CD4-positive, alpha-beta T cell (primary cell): ENCODE measurements at regions of chr20 and their contacts with region 1.

Region 1: DNA sequence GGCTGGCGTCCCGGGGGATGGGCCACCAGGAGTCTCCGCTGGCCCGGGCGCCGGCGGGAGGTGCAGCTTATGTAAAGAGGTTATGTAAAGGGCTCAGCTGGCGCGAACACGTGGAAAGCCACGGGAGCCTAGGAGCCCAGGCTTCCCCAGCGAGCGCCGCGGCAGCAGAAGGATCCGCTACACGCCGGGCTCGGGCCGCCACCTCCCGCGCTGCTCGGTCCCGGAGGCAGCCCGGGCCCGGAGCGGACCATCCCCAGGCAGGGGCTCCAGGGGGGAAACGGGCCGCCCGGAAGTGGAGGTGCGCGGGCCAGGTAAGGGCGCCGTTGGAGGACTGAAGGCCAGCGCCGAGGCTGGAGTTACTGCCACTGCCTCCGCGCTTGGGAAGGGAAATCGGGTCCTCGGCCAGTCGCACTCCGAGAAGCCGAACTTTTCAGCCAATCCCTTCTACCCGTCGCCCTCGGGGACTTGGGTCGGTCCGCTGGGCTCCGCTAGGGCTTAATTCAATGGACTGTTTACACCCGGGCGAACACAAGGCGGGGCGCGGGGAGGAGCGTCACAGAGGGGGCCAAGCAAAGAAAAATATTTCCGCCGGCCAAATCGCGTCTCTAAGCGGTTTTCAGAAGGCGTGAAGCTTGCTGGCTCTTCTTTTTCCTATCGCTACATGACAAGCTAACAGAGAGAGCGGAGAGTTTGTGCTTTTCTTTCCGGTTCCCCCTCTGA is 398 bp downstream of the STK35 start:
- DNase-seq: peak; percentile 84 to 95 (median 87)
- ATAC-seq: peak; percentile 75
- H3K4me3 ChIP-seq: peak overlapping the region; percentile 89
- H3K4me3 Mint-ChIP-seq: peak overlapping the region; percentile 99
- H3K27ac ChIP-seq: peak overlapping the region; percentile 96 to 99
- H3K27ac Mint-ChIP-seq: peak overlapping the region; percentile 100
- H3K4me1 ChIP-seq: peaks cover 37% of the 10 kb centered on the region
- H3K4me1 Mint-ChIP-seq: peaks cover 48% of the 10 kb centered on the region
- H3K27me3 ChIP-seq: no peaks in the 10 kb centered on the region
- H3K27me3 Mint-ChIP-seq: peaks cover 4% of the 10 kb centered on the region
- CTCF ChIP-seq: no peak

Region 2: GRCh38 chr20:1118336-1119127 is 983.5 kb before region 1 on chr20 and contains the start of gene PSMF1:
- CTCF ChIA-PET with region 1: no interaction called
- POLR2A ChIA-PET with region 1: no interaction called
- intact Hi-C with region 1: loop called in 1 of 2 experiments (anchors 5 kb)
- DNase-seq: peak; percentile 91 to 98 (median 96)
- ATAC-seq: peak; percentile 89
- H3K4me3 ChIP-seq: peak within 1 kb of the TSS; percentile 81
- H3K4me3 Mint-ChIP-seq: peak within 1 kb of the TSS; percentile 96
- H3K27ac ChIP-seq: peak within 1 kb of the TSS; percentile 72 to 74
- H3K27ac Mint-ChIP-seq: peak within 1 kb of the TSS; percentile 96
- H3K4me1 ChIP-seq: peaks cover 55% of the 10 kb centered on the region
- H3K4me1 Mint-ChIP-seq: peaks cover 67% of the 10 kb centered on the region
- H3K27me3 ChIP-seq: no peaks in the 10 kb centered on the region
- H3K27me3 Mint-ChIP-seq: no peaks in the 10 kb centered on the region
- CTCF ChIP-seq: no peak
- total RNA-seq, gene PSMF1: 79.9 to 84.2 TPM

Region 3: DNA sequence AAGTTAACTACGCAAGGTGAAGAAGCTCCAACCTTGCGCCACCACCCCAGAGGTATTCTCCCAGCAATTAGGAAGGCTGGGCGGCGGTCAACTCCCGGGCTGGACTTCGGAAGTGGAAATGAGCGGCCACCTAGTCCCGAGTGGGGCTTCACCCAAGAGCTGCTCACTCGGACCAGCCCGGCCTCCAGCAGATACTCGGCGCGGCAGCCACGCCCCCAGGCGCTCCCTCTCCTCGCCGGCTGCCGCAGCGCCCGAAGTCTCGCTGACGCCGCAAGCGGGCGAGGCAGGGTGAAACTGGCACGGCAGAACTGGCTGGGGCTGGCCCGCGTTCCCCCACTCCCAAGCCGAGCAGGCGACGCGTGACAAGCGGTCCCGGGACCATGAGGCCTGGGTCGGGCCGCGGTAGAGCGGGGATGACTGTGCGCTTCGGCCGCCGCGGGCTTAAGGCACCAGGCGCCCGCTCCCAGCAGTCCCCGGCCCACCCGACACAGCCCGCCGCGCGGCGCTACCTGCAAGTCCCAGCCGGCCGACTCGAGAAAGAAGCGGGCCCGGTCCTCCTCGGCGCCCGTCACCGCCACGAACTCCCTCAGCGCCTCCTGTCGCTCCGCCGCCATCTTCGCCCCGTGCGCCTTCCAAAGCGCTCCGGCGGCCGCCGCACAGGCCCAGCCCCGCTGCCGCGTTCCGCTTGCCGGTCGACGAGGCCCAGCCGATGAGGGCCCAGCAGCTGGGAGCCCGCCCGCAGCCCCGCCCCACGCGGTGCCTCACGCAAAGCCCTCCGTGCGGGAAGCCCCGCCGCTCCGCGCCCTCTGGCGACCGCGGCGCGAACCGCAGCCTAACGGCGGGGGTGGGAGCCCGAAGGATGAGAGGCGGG is 635.6 kb before region 1 on chr20 and contains the start of gene NSFL1C:
- CTCF ChIA-PET with region 1: interaction called, 3 read pairs
- POLR2A ChIA-PET with region 1: no interaction called
- intact Hi-C with region 1: loop called in 1 of 2 experiments (anchors 2 kb)
- DNase-seq: peak; percentile 94 to 99 (median 98)
- ATAC-seq: peak; percentile 96
- H3K4me3 ChIP-seq: peak within 1 kb of the TSS; percentile 73
- H3K4me3 Mint-ChIP-seq: peak within 1 kb of the TSS; percentile 88
- H3K27ac ChIP-seq: peak within 1 kb of the TSS; percentile 41 to 84
- H3K27ac Mint-ChIP-seq: peak within 1 kb of the TSS; percentile 68
- H3K4me1 ChIP-seq: peaks cover 34% of the 10 kb centered on the region
- H3K4me1 Mint-ChIP-seq: peaks cover 49% of the 10 kb centered on the region
- H3K27me3 ChIP-seq: peaks cover 0 to 2% of the 10 kb centered on the region in 2 experiments
- H3K27me3 Mint-ChIP-seq: peaks cover 10% of the 10 kb centered on the region
- CTCF ChIP-seq: peak; percentile 100
- total RNA-seq, gene NSFL1C: 53.2 to 53.4 TPM

Region 4: GRCh38 chr20:2065099-2065498 is 36.9 kb before region 1 on chr20:
- CTCF ChIA-PET with region 1: no interaction called
- POLR2A ChIA-PET with region 1: no interaction called
- intact Hi-C with region 1: no loop called
- DNase-seq: no peak
- ATAC-seq: no peak
- H3K4me3 ChIP-seq: no peak overlapping the region
- H3K4me3 Mint-ChIP-seq: no peak overlapping the region
- H3K27ac ChIP-seq: no peak overlapping the region
- H3K27ac Mint-ChIP-seq: no peak overlapping the region
- H3K4me1 ChIP-seq: no peaks in the 10 kb centered on the region
- H3K4me1 Mint-ChIP-seq: no peaks in the 10 kb centered on the region
- H3K27me3 ChIP-seq: peaks cover 10 to 24% of the 10 kb centered on the region in 2 experiments
- H3K27me3 Mint-ChIP-seq: peaks cover 61% of the 10 kb centered on the region
- CTCF ChIP-seq: no peak

Region 5: DNA sequence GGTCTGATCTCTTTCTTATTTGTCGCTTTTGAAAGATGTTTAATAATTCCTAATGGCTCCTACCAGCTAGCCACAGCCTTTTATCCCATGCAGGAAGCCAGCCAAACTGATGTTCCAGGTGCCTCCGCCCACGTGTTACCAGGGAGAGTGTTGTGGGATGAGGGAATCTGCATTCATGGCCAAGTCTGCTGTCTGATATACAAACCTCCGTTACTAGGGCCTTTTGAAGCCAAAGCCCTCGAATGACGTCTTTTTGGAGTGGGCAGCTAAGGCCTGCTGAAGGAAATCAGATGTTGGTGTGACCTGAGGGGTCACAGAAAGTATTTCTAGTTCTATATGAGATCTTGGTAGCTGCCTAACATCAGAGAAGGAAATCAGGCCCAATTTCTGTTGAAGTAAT is 20.9 kb after region 1 on chr20:
- CTCF ChIA-PET with region 1: interaction called, 3 read pairs
- POLR2A ChIA-PET with region 1: interaction called, 3 read pairs
- intact Hi-C with region 1: loop called in 1 of 2 experiments (anchors 2 kb)
- DNase-seq: no peak
- ATAC-seq: no peak
- H3K4me3 ChIP-seq: no peak overlapping the region
- H3K4me3 Mint-ChIP-seq: no peak overlapping the region
- H3K27ac ChIP-seq: no peak overlapping the region
- H3K27ac Mint-ChIP-seq: no peak overlapping the region
- H3K4me1 ChIP-seq: peaks cover 31% of the 10 kb centered on the region
- H3K4me1 Mint-ChIP-seq: peaks cover 90% of the 10 kb centered on the region
- H3K27me3 ChIP-seq: no peaks in the 10 kb centered on the region
- H3K27me3 Mint-ChIP-seq: no peaks in the 10 kb centered on the region
- CTCF ChIP-seq: no peak

Region 6: DNA sequence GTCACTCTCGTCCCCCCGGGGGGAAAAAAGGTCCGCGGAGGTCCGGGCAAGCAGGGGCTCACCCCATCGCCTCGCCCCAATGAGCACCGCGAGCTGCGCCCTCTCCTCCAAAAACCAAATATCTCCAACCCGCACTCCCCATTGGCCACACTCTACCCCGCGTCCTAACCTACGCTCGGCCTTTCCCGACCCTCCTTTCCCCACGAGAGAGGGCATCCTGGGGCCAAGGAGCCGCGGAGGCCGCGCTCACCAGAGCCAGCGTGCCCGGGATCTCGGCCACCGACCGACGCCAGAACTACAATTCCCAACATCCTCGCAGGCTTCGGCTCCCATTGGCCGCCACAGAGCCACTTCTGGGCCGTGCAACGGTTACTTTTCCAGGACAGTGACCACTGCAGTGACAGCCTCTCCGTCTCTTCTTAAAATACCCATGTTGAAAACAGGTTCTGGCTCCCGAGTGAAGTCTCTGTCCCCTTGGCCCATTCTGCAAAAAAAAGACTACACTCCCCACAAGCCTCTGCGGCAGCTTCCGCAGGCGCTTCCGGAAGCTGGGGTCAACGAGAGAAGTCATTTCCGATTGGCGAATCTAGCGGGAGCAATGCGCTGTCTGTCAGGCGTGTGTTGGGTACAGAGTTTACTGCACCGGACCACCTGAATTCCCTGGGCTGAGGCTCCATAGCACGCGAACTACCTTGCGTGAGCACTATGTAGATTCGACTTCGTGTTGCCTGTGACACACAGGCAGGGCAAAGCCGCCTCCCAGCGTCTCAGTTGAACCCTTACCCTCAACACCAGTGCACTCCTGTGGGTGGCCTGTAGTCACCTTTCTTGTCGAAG is 406.8 kb after region 1 on chr20 and contains the start of gene ZNF343:
- CTCF ChIA-PET with region 1: no interaction called
- POLR2A ChIA-PET with region 1: no interaction called
- intact Hi-C with region 1: loop called in 1 of 2 experiments (anchors 2 kb)
- DNase-seq: peak; percentile 58 to 89 (median 71)
- ATAC-seq: peak; percentile 94
- H3K4me3 ChIP-seq: peak within 1 kb of the TSS; percentile 90
- H3K4me3 Mint-ChIP-seq: peak within 1 kb of the TSS; percentile 99
- H3K27ac ChIP-seq: peak within 1 kb of the TSS in 1 of 2 donors; percentile 72
- H3K27ac Mint-ChIP-seq: peak within 1 kb of the TSS; percentile 81
- H3K4me1 ChIP-seq: peaks cover 21% of the 10 kb centered on the region
- H3K4me1 Mint-ChIP-seq: peaks cover 29% of the 10 kb centered on the region
- H3K27me3 ChIP-seq: peaks cover 0 to 13% of the 10 kb centered on the region in 2 experiments
- H3K27me3 Mint-ChIP-seq: peaks cover 25% of the 10 kb centered on the region
- CTCF ChIP-seq: no peak
- total RNA-seq, gene ZNF343: 5.0 to 5.1 TPM